Lower lobe of right lung (tissue), 2 donors: ENCODE measurements at regions of chr5 and their contacts with region 1.

Region 1: GRCh38 chr5:132386644-132387286 is 17.3 kb downstream of the SLC22A5 start:
- DNase-seq: peak; percentile 83
- ATAC-seq: peak; percentile 90 to 92
- H3K4me3 ChIP-seq: no peak overlapping the region
- H3K27ac ChIP-seq: peak overlapping the region; percentile 84
- H3K4me1 ChIP-seq: peaks cover 52% of the 10 kb centered on the region
- H3K27me3 ChIP-seq: no peaks in the 10 kb centered on the region
- CTCF ChIP-seq: peak; percentile 87

Region 2: GRCh38 chr5:132327252-132327955 is 59.4 kb before region 1 on chr5:
- intact Hi-C with region 1: no loop called
- DNase-seq: no peak
- ATAC-seq: no peak
- H3K4me3 ChIP-seq: no peak overlapping the region
- H3K27ac ChIP-seq: no peak overlapping the region
- H3K4me1 ChIP-seq: no peaks in the 10 kb centered on the region
- H3K27me3 ChIP-seq: no peaks in the 10 kb centered on the region
- CTCF ChIP-seq: no peak

Region 3: GRCh38 chr5:132490486-132491367 is 104.0 kb after region 1 on chr5 and contains the start of gene IRF1:
- intact Hi-C with region 1: no loop called
- DNase-seq: peak; percentile 96
- ATAC-seq: peak; percentile 92 to 94
- H3K4me3 ChIP-seq: peak within 1 kb of the TSS; percentile 78
- H3K27ac ChIP-seq: peak within 1 kb of the TSS; percentile 99
- H3K4me1 ChIP-seq: peaks cover 73% of the 10 kb centered on the region
- H3K27me3 ChIP-seq: no peaks in the 10 kb centered on the region
- CTCF ChIP-seq: peak; percentile 8
- total RNA-seq, gene IRF1: 81.2 TPM

Region 4: GRCh38 chr5:132500931-132501630 is 114.3 kb after region 1 on chr5:
- intact Hi-C with region 1: loop called (anchors 5 kb)
- DNase-seq: peak; percentile 74
- ATAC-seq: peak; percentile 16 to 29
- H3K4me3 ChIP-seq: no peak overlapping the region
- H3K27ac ChIP-seq: peak overlapping the region; percentile 69
- H3K4me1 ChIP-seq: peaks cover 54% of the 10 kb centered on the region
- H3K27me3 ChIP-seq: no peaks in the 10 kb centered on the region
- CTCF ChIP-seq: peak; percentile 87